Dorsolateral prefrontal cortex (tissue), 120 donors: ENCODE measurements at regions of chr15 and their contacts with region 1.

Region 1: GRCh38 chr15:89206908-89207331 is 14.5 kb downstream of the RLBP1 start:
- DNase-seq: peak; percentile 72 to 87 (median 79)
- H3K4me3 ChIP-seq: peak overlapping the region in 54 of 59 donors; percentile 7 to 64 (median 43)
- H3K27ac ChIP-seq: peak overlapping the region in 9 of 59 donors; percentile 10 to 61 (median 27)
- H3K27me3 ChIP-seq: no peaks in the 10 kb centered on the region
- CTCF ChIP-seq: peak; percentile 93 to 100 (median 99)

Region 2: GRCh38 chr15:89243691-89244471 is 37.0 kb after region 1 on chr15 and contains the start of gene FANCI:
- intact Hi-C with region 1: loop called (anchors 2 to 5 kb)
- DNase-seq: peak; percentile 89 to 96 (median 95)
- H3K4me3 ChIP-seq: peak within 1 kb of the TSS; percentile 60 to 94 (median 81)
- H3K27ac ChIP-seq: peak within 1 kb of the TSS in 52 of 59 donors; percentile 2 to 86 (median 72)
- H3K27me3 ChIP-seq: no peaks in the 10 kb centered on the region
- CTCF ChIP-seq: peak; percentile 31 to 85 (median 70)
- total RNA-seq, gene FANCI: 5.2 to 24.3 (median 8.9) TPM

Region 3: GRCh38 chr15:89278307-89278706 is 71.4 kb after region 1 on chr15:
- intact Hi-C with region 1: no loop called
- DNase-seq: no peak
- H3K4me3 ChIP-seq: no peak overlapping the region
- H3K27ac ChIP-seq: no peak overlapping the region
- H3K27me3 ChIP-seq: no peaks in the 10 kb centered on the region
- CTCF ChIP-seq: no peak

Region 4: GRCh38 chr15:89299896-89300295 is 93.0 kb after region 1 on chr15:
- intact Hi-C with region 1: loop called (anchors 2 to 5 kb)
- DNase-seq: no peak
- H3K4me3 ChIP-seq: no peak overlapping the region
- H3K27ac ChIP-seq: no peak overlapping the region
- H3K27me3 ChIP-seq: no peaks in the 10 kb centered on the region
- CTCF ChIP-seq: peak in 53 of 56 donors; percentile 21 to 73 (median 50)

Region 5: DNA sequence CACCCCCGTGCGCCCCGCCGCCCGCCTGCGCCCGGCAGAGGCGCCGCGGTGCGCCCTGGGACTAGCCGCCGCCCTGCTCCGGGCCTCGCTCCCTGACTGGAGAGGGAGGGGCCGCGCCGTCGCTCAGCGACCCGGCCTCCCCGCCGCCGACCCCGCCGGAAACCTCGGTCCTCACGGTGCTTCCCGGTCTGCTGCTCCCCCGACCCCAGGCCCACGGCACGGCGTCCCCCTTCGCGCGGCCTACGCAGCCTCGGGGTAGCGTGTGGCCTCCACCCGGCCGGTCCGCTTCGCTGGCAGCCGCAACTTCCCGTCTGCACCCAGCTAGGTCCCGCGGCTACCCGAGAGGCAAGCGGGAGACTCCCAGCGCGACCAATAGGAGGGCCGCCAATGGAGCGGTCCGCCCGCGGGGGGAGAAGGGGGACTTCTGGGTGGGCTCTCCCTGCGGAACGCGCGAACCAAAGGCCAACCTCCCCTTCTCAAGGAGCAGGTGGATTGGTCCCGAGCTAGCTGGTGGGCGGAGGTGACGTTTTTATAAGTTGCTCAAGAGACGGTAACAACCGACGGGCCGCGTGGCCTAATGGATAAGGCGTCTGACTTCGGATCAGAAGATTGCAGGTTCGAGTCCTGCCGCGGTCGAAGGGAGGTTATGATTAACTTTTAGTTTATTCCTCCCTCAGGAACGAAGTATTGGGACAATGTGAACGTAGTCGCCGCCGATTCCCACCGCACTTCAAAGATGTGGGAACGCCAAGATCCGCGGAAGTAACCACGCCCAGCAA is 127.8 kb after region 1 on chr15 and contains the start of gene POLG:
- intact Hi-C with region 1: loop called in 1 of 2 experiments (anchors 10 kb)
- DNase-seq: peak; percentile 93 to 99 (median 98)
- H3K4me3 ChIP-seq: peak within 1 kb of the TSS; percentile 65 to 96 (median 88)
- H3K27ac ChIP-seq: peak within 1 kb of the TSS in 58 of 59 donors; percentile 33 to 93 (median 87)
- H3K27me3 ChIP-seq: no peaks in the 10 kb centered on the region
- CTCF ChIP-seq: peak in 21 of 56 donors; percentile 1 to 51 (median 22)
- total RNA-seq, gene POLG: 42.1 to 75.8 (median 58.1) TPM

Region 6: DNA sequence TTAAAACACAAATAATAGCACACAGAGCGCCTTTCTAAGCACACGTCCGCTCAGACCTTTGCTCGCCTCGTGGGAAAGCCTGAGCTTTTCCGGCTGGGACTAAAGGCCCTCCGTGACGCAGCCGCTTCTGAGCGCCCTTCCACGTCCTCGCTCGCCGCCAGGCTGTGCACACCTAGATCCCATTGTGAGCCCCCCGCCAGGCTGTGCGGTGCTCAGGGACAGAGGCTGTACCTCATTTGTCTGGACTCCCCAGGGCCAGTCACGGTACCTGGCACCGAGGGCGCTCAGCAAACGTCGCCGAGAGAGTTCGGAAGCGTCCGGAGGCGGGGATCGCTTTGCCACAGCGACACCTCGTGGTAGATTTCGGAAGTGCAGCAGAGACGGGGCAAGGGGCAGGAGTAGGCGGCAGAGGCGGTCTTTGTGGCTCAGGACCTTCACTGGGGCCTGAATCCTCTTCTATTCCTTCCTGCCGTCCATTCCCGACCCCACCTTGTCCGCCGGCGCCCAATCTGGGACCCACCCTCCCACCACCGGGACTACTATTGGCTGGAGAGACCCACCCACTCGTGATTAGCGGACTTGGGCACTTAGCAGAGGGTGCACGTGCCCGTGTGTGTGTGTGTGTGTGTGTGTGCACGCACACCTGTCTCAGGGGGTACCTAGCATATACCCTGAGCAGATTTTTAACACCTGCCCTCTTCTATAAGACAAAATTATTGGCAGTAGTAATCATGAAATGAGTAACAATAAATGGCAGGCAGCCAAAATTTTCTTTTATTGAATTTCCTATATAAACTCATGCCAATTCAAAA is 223.8 kb after region 1 on chr15:
- intact Hi-C with region 1: loop called in 1 of 2 experiments (anchors 10 kb)
- DNase-seq: peak; percentile 73 to 92 (median 89)
- H3K4me3 ChIP-seq: peak overlapping the region; percentile 29 to 84 (median 59)
- H3K27ac ChIP-seq: peak overlapping the region in 53 of 59 donors; percentile 3 to 93 (median 66)
- H3K27me3 ChIP-seq: no peaks in the 10 kb centered on the region
- CTCF ChIP-seq: peak; percentile 94 to 100 (median 99)